ENCODE measurements at regions of chr6 and their contacts with region 1.

Region 1: DNA sequence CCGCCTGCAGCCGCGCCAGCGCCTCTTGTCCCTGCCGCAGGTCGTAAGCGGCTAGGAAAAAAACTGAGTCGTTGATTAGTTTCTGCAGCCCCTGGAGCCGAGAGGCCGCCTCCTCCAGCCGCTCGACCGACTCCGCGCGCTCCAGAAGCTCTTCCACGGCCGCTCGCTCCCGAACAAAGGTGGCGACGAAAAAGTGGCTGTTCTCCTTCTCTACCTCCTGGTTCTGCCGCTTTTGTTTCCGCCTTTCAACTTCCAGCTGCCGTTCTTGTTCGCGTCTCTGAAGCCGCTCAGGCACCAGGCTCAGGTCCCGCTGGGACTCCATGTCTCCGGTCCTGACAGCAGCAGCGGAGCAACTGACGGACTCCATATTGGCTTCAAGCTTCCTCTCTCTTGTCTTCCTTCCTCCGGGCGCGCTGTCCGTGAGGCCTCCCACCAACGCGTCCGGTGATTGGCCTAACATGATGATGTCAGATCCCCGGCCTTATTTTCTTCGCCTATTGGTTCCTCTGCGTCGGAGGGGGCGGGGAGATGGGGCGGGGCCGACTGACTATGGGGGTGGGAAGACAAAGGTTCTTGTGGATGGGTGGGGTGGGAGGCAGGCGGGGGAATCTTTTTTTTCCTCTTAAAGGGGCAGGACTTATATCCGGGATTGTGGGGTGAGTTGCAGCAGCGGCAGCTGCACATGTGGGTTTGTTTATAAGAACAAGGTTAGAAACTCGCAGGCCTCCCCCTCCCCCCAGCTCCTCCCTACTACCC is at the start of gene TBCC:
- DNase-seq: peak; percentile 94

Region 2: DNA sequence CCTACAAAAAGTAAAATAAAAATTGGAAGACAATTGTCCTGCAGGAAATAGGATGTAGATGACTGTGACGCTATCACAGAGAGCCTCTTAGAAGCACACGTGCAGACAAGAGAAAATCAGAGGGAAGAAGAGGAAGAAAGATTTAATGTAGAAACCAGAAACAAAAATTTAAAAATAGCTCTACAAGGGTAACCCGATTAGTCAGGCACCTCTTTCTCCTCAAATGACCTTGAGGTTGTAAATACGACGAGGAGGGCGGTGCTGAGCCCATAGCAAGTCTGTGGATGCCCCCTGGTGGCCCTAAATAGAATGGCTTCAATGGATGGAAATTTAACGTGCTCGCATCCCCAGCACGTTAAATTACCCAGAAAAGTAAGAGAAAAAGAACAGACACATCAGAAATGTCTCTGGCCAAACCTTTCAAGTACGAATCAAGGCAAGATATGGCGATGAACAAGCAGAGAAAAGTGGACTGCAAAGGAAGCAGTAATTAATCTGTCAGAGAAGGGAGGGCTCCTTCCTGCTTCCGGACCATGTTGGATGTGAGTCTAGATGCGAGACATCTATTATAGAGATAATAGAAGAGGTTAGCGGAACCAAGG is 19.3 kb before region 1 on chr6:
- CTCF ChIA-PET with region 1: interaction called, 6 read pairs
- POLR2A ChIA-PET with region 1: interaction called, 19 read pairs
- DNase-seq: peak; percentile 76

Region 3: GRCh38 chr6:42762426-42762859 is 16.6 kb after region 1 on chr6:
- CTCF ChIA-PET with region 1: no interaction called
- POLR2A ChIA-PET with region 1: interaction called, 12 read pairs
- DNase-seq: no peak

Region 4: DNA sequence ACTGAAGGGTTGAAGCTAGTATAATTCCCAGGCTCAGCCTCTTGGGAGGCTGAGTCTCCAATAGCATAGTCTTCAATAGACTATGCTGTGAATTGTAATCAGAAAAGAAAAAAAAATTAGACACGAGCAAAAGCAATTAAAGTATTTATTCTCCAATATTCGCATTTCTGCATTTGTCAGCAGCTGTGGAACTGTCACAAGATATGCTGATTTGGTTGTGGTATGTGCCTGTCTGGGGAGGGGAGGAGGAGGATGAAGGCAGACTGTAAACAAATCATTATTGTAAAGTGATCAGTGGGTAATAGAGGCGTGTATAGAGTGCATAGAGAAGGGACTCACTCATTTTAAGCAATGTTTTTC is 25.8 kb after region 1 on chr6:
- CTCF ChIA-PET with region 1: interaction called, 3 read pairs
- POLR2A ChIA-PET with region 1: interaction called, 11 read pairs
- DNase-seq: no peak

Region 5: DNA sequence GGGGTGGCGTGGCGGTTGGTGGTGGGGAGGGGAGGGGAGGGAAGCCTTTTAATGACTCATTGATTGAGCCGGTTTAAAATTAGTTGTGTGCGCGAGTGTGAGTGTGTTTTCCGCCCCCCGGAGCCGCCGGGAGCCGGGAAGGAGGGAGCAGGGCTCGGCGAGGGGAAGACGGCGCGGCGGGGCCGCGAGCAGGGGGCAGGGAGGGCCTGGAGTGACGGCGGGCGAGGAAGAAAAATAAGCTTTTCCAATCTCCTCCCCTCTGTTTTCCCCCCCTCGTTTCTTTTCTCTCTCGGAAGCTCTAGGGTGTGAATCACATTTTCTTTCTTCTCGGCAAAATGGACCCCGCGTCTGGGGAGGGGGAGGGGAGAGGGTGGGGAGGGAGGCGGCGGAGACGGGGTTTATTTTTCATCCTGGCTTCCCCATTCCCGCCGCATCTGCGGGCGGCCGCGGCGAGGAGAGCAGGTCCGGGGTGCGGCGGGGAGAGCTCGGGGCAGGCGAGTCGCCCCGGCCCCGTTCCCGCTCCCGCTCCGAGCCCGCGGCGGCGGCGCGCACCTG is 36.8 kb after region 1 on chr6:
- CTCF ChIA-PET with region 1: no interaction called
- POLR2A ChIA-PET with region 1: interaction called, 128 read pairs
- DNase-seq: peak; percentile 66

Region 6: DNA sequence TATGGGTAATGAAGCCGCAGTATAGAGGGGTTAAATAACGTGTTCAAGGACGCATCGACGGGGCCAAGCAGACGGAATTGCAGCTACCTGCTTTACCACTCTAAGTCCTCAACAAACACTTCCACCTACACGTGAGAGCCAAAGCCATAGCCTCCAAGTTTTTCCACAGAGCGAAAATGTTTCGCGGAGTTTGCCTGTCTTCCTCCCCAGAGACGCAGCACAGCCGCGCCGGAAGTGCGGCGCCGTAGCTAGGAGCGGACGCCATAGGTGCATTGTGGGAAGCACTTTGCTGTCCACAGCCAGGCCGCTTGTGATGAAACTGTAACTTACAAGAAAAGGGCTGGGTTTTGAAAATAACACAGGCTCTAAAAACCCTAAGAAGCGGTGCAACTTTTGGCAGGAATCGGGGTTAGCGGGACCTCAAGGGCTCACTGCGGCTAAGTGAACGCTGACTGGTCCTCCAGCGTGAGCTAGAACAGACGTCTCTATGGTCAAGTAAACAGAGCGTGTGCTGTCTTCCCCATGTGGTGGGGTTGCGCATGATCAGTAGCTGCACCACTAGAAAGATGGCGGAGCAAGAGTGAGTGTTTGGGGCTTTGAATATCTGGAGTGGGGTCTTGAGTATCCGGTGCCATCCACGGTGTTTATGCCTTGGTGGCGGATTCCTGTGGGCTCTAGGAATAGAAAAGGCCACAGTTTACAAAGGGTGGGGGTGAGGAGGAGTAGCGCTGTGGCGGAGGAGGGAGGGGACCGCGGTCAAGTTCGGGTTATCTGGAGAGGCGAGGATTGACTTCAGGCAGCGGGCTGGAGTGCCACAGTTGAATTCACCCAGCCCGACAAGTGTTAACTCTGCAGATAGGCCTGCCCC is 133.7 kb after region 1 on chr6 and contains the start of gene RPL7L1:
- CTCF ChIA-PET with region 1: no interaction called
- POLR2A ChIA-PET with region 1: interaction called, 45 read pairs
- DNase-seq: peak; percentile 74

Measured in HEK293T (cell line).